Adrenal gland (tissue), 19 donors: ENCODE measurements at regions of chr16 and their contacts with region 1.

Region 1: DNA sequence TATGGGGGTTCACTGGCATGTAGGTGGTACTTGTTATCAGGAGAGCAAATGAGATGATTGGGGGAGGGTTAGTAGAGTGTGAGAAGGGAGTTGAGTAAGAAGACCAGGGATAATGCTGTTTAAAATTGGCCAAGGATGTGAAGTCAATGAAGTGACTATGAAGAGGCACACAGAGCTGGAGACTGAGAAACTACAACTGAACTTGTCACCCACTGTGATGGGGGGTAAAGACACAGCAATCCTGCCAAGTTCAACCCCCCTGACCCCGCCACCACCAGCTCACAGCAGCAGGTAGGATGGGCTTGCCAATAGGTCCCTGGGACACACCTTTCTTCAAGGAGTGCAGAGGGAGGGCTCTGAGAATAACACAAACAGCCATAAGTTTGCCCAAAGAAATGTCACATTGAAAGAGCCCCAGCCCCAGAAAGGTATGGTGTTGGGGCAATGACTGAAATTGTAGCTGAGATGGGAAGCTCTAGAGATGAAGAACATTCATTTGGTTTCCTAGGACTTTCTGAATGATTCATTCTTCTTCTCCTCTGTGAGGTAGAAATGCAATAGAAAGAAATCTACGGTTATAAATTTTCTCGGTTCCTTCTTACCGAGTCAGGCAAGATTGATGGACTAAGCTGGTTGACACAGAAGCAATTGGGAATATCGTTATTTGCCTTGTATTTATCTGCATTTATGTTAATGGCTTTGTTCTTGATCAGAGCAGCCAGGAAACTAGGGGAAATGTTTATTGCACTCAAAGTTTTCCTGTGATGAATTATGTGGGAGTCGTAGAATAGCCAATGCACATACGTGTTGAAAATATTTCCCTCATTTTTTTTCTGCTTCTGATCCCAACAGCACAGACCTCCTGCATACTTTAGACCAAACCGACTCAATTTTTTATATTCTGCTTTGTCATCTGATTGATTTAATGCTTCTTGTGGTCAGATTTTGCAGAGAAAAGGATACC is 595.2 kb upstream of the CDH11 start:
- DNase-seq: no peak
- H3K4me3 ChIP-seq: no peak overlapping the region
- H3K27ac ChIP-seq: no peak overlapping the region
- H3K4me1 ChIP-seq: no peaks in the 10 kb centered on the region
- H3K27me3 ChIP-seq: no peaks in the 10 kb centered on the region
- CTCF ChIP-seq: no peak
- POLR2A ChIP-seq: no peak

Region 2: GRCh38 chr16:66270333-66270927 is 553.4 kb after region 1 on chr16:
- intact Hi-C with region 1: loop called in 1 of 2 experiments (anchors 10 kb)
- DNase-seq: peak; percentile 44 to 71 (median 68)
- H3K4me3 ChIP-seq: peak overlapping the region in 1 of 4 donors; percentile 49
- H3K27ac ChIP-seq: peak overlapping the region in 1 of 5 donors; percentile 54
- H3K4me1 ChIP-seq: peaks cover 0 to 8% of the 10 kb centered on the region in 2 donors
- H3K27me3 ChIP-seq: no peaks in the 10 kb centered on the region
- CTCF ChIP-seq: peak; percentile 44 to 99 (median 75)
- POLR2A ChIP-seq: no peak